A673 (cell line): ENCODE measurements at regions of chr4 and their contacts with region 1.

Region 1: DNA sequence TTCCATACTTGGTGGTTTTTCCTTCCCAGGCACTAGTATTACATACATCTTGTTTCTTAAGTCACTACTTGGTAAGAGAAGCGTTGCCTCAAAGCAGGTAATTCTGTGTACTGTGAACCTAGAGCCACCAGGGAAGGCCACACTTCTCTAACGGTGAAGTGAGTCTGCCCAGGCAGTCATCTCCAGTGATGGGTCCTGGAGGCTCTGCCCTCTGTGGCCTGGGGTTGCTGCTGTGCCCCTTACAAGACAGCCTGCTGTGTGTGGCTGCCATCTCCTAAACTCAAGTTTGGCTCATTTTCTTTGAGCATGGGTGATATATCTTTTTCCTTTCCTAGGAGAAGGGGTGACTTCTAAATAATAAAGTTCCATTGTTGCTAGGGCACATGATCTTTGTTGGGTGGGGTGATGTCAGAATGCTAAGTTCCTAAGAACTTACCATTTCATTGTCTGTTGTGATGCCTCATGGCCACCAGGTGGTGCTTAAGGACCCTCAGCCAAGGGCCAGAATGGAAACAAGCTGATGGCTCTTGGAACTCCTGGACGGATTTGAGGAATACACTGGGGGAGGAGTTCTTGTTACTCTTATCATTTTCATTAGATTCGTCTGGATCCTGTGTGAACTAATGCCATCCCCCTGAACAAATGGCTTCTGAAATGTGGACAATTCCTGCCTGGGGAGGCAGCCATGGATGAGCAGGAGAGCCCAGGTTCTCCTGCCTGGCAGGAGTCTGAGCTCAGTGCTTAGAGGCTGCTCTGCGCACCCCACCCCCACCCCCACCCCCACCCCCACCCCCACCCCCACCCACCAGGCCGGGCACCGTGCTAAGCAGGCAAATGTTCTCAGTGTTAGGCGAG is 41.1 kb upstream of the WDR1 start:
- DNase-seq: peak; percentile 75
- H3K4me3 ChIP-seq: no peak overlapping the region
- H3K27ac ChIP-seq: no peak overlapping the region
- H3K4me1 ChIP-seq: no peaks in the 10 kb centered on the region
- H3K27me3 ChIP-seq: peaks cover 34% of the 10 kb centered on the region
- CTCF ChIP-seq: peak; percentile 78

Region 2: DNA sequence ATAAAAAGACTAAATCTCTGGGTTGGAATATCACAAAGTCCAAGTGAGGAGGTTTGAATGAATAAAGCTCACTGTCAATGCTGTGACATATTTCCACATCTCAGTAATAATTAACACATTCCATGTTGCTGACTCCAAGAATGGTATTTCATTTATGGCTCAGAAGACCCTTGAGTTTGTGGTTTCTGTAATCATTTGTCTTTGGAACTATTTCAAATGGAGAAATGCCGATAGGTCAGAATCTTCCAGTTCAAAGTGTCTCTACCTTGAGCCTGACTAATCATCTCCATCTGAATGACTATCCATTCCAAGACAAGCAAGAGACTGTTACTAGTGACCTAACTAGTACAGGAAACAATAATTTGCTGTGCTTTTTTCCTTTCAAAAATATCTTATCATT is 112.2 kb before region 1 on chr4:
- CTCF ChIA-PET with region 1: no interaction called
- POLR2A ChIA-PET with region 1: no interaction called
- intact Hi-C with region 1: no loop called
- DNase-seq: no peak
- H3K4me3 ChIP-seq: no peak overlapping the region
- H3K27ac ChIP-seq: no peak overlapping the region
- H3K4me1 ChIP-seq: no peaks in the 10 kb centered on the region
- H3K27me3 ChIP-seq: peaks cover 26% of the 10 kb centered on the region
- CTCF ChIP-seq: no peak

Region 3: GRCh38 chr4:10554694-10555093 is 397.0 kb after region 1 on chr4:
- CTCF ChIA-PET with region 1: no interaction called
- POLR2A ChIA-PET with region 1: no interaction called
- intact Hi-C with region 1: loop called (anchors 2 kb)
- DNase-seq: peak; percentile 62
- H3K4me3 ChIP-seq: no peak overlapping the region
- H3K27ac ChIP-seq: no peak overlapping the region
- H3K4me1 ChIP-seq: no peaks in the 10 kb centered on the region
- H3K27me3 ChIP-seq: no peaks in the 10 kb centered on the region
- CTCF ChIP-seq: peak; percentile 78